HEK293 (cell line): ENCODE measurements at regions of chr1 and their contacts with region 1.

Region 1: DNA sequence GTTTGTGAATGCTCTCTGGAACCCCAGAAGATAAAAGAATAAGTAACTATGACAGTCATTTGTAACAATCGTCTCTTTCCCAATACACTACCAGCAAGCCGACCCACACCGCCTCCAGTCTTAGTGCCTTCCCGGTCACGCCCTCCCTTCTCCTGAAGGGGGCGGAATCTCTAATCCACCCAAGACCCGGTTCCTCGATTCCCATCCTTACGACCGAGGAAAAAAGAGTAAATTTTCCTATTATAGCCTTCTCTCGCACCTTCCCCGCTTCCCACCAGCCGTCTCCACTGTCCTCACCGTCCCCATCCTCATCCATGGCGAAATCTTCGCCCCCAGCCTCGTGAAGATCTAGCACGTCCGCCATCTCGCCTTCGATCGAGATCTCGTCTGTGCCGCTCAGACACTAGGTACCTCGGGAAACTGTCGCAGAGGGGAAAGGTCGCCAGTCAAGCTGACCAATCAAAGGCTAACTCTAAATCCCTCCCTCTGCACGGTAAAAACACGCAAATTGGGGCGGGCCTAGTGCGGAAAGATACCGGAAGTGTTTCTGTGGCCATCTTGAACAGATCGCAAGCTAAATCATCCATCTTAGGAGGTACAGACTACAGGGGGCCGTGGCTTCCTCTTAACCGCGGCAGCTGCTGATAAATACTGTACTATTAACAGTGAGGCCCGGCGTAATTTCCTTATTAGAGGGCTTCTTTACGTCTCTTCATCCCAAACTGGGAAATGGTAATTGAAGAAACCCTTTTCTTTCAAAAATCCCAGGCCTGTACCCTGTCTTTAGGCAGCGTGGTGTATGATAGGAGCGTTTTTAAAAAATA is at the start of gene RBM8A:
- H3K4me3 ChIP-seq: peak within 1 kb of the TSS; percentile 83
- H3K27ac ChIP-seq: peak within 1 kb of the TSS; percentile 59
- H3K4me1 ChIP-seq: no peaks in the 10 kb centered on the region
- CTCF ChIP-seq: peak; percentile 98

Region 2: GRCh38 chr1:145906954-145907753 is 20.1 kb before region 1 on chr1:
- CTCF ChIA-PET with region 1: interaction called, 18 read pairs
- POLR2A ChIA-PET with region 1: interaction called, 5 read pairs
- H3K4me3 ChIP-seq: no peak overlapping the region
- H3K27ac ChIP-seq: no peak overlapping the region
- H3K4me1 ChIP-seq: no peaks in the 10 kb centered on the region
- CTCF ChIP-seq: no peak

Region 3: DNA sequence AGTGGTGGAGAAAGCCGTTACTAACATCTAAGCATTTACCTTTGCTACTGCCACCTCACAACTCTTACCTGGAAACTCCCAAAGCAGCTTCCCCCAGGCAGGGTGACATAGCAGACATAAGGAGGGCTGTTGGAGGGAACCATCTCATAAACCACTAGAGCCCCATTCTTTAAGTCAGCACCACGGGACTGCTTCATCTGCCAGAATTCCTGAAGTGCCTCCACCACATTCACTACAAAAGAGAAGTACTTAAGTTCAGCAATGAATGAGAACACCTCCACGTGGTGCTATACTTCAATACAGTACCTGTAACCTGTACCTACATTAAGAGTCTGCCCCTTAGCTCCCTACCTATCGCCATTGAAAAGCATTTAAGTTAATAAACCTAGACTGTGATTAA is 20.3 kb after region 1 on chr1:
- CTCF ChIA-PET with region 1: no interaction called
- POLR2A ChIA-PET with region 1: no interaction called
- H3K4me3 ChIP-seq: no peak overlapping the region
- H3K27ac ChIP-seq: no peak overlapping the region
- H3K4me1 ChIP-seq: no peaks in the 10 kb centered on the region
- CTCF ChIP-seq: no peak

Region 4: DNA sequence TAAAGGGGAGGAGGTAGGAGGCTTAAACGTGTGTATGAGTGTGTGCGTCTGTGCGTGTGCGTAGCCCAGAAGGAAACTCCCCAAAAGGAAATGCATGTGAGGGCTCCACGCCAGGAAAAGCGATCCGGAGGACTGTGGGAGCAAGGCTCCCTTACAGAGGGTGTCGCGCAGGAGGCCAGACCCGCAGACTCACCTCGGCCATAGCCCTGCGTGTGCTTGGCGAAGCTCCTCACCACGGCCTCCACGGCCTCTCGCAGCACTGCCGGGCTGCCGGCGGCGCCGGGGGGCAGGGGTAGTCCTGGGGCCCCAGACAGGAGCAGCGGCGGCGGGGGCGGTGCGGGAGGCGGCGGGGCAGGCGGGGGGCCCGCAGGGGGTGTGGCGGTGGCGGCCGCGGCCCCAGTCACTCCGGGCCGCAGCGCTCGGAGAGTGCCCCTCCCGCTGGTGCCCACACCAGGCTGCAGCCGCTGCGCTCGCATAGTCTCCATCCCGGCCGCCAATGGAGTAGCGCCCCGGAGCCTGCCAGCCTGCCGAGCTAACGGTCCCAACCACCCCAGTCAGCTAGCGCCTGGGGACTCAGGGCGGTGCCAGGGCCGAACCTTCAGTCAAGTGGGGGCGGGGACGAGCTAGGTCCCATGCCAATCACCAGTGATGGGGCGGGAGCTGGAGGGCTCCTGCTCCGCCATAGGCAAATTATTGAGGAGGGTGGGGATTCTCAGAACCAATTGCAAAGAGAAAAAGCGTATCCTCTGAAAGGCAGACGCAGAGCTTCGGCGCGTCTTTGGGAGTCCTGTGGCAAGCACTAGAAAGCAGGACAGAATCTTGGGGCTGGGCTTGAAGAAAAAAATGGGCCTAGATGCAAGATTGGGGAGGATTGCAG is 30.4 kb after region 1 on chr1 and contains the start of gene LIX1L:
- CTCF ChIA-PET with region 1: interaction called, 9 read pairs
- POLR2A ChIA-PET with region 1: interaction called, 51 read pairs
- H3K4me3 ChIP-seq: peak within 1 kb of the TSS; percentile 81
- H3K27ac ChIP-seq: peak within 1 kb of the TSS; percentile 49; the same call in 1 of the 2 replicates
- H3K4me1 ChIP-seq: peaks cover 10% of the 10 kb centered on the region
- CTCF ChIP-seq: no peak